Left cardiac atrium (tissue), 4 donors: ENCODE measurements at regions of chr18 and their contacts with region 1.

Region 1: DNA sequence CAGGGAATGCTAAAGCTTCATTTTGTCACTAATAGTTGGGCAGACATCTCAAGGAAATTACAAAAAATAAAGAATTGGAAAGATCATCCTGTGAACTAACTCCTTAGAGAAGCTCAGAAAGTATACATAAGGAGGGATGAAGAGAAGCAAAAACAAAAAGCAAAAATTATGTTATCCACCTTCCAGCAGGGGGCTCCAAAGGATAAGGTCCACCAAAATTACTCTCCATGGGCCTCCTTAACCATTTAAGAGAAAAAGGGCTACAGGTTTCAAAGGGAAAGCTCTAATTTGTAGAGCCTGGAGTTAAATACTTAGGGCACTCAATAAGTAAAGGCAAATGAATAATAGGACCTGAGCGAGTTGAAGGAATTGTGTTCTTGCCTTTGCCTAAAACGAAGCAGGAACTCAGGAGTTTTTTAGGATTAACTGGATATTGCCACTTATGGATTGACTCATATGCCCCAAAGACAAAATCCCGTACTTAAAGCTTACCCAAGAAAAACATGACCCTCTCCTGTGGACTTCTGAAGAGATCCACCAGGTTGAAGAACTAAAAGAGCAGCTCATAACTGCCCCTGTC is 1167.9 kb downstream of the DSC3 start:
- DNase-seq: no peak
- ATAC-seq: no peak

Region 2: DNA sequence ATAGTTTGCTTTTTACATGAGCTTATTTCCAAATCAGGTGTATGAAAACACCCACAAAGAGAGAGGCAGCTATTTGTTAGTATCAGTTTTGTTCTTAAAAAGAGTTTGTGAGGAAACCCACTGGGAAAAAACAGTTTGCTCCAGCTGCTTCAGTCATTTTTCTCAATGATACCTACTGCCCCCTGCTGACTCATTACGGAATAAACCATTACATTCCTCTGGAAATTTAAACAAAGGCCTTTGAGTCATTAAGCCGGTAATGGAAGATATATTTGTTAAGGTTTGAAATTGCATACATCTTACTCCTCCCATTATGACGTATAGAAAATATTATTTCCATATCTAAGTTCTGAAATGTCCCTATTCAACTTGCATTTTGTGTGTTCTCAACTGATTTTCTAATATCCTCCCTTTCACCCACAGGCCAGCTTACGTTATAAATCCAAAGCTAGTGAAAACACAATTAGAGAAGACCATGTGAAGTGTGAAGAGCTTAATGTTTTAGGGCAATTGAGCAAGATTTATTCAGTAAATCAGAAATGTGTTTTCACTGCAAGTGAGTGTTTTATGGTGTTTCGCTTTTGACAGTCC is 406.4 kb after region 1 on chr18:
- intact Hi-C with region 1: loop called in 1 of 2 experiments (anchors 10 kb)
- DNase-seq: no peak
- ATAC-seq: no peak

Region 3: DNA sequence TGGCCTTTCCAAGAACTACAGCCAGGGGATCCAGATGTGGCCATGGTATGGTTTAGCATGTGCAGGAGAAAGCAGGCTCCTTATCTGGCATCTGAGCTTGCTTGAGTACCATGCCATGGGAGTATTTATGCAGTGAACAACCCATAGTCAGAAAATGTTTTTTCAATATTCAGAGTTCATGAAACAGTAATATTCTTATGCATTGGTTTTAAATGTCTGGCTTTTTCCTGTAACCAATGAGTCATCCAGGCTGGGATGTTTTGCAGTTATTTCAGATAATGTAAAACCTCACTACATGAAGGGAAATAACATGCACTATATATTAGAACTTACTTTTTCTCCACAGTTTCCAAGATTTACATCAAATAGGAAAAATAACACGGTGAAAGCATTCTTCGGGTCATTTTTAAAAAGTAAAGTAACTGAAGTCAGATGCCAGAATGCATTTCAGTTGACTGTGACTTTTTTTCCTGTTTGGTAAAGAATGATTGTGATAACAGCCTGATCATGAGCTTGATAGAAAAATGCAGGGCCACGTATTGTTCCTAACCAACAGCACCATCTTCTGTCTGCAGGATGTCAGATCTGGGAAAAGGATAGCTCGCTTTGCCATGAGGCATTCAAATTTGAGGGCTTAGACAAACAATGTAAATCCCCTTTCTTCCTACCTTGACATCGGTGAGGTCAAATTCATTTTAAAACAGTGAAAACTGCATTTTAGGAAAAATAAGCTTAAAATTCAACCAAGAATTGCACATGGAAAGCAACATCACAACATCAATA is 1015.1 kb after region 1 on chr18:
- intact Hi-C with region 1: loop called in 1 of 2 experiments (anchors 10 kb)
- DNase-seq: no peak
- ATAC-seq: no peak

Region 4: DNA sequence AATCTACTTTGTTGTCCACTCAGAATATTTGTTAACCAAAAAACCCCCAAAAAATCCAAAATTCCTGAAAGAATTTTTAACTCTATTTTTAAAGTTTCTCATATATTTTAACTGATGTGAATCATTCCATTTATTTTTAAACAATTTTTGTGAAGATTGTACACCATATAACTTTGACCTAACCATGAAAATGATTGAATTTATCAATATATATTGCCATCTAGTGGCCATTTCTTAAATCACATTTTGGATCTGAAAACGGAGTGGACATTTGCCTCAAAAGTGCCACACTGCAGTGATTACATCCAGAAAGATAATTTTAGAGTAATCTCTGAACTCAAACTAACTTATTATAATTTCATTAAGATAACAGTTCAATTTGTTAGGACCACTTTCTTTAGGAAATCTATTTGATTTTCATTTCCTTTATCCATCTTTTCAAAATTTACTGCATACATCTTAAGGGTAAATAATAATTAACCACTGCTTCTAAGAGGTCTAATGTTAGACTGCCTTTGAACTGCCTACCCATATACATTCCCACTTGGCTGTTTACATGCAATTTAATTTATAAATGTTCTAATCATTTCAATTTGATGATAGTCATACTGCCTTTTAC is 1096.8 kb after region 1 on chr18:
- intact Hi-C with region 1: loop called in 1 of 2 experiments (anchors 10 kb)
- DNase-seq: no peak
- ATAC-seq: no peak